ENCODE measurements at regions of chr12 and their contacts with region 1.

Region 1: DNA sequence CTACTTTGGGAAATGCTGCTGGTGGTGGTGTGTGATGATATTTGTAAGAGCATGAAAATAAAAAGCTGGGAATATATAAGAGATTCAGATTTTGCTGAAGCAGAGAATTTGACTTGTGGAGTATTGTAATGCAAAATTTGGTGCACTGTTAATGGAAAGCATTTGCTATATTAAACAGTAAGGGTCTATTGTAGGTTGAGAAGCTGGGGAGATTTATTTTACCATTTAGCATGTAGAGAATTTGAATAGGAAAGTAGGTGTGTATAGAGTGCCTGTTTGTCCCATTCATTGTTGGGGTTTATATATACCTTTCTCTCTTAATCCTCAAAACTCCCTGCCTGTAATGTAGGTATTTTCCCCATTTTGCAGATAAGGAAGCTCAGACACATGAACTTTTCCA is 48.4 kb downstream of the CRADD start:
- DNase-seq: no peak
- ATAC-seq: no peak
- H3K4me3 ChIP-seq: no peak overlapping the region
- H3K4me3 Mint-ChIP-seq: no peak overlapping the region
- H3K27ac ChIP-seq: no peak overlapping the region
- H3K27ac Mint-ChIP-seq: no peak overlapping the region
- H3K4me1 ChIP-seq: no peaks in the 10 kb centered on the region
- H3K4me1 Mint-ChIP-seq: no peaks in the 10 kb centered on the region
- H3K27me3 ChIP-seq: no peaks in the 10 kb centered on the region
- H3K27me3 Mint-ChIP-seq: no peaks in the 10 kb centered on the region

Region 2: DNA sequence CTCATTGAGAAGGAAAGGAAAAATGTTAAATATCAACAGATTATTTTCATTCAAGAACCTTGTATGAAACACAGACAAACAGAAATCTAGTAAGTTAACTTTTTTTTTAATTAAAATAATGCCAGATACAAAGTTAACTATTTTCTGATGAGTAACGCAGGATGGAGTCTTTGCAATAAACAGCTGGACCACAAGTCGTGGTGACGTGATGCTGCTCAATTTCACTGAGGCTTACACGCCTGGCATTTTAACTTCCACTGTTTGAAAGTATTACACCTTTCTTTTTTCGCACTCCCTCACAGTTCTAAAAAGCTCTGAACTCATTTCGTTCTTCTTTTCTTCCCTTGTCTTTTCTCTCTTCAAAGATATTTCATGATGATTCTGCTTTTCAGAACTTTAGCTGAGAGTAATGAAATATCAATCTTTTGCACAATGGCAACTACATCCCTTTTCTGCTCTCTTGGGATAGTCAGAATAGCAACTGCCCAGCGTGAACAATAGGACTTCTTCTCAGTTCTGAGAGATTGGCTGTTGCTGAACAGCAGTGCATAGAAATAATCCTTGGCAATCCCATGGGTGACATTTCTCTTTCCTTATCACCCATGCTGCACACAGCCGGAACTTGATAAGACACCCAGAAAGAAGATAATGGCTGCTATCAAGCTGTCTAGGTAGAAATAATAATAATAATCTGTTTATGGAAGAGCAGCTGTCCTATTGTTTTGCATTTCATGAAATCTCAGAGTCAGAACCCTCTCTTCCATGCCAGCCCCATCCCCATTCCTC is 1740.3 kb before region 1 on chr12:
- CTCF ChIA-PET with region 1: no interaction called
- POLR2A ChIA-PET with region 1: no interaction called
- DNase-seq: no peak
- ATAC-seq: peak in 1 of 4 experiments; percentile 55
- H3K4me3 ChIP-seq: no peak overlapping the region
- H3K4me3 Mint-ChIP-seq: no peak overlapping the region
- H3K27ac ChIP-seq: no peak overlapping the region
- H3K27ac Mint-ChIP-seq: peak overlapping the region in 1 of 2 donors; percentile 48
- H3K4me1 ChIP-seq: no peaks in the 10 kb centered on the region
- H3K4me1 Mint-ChIP-seq: peaks cover 66 to 82% (median 68%) of the 10 kb centered on the region in 3 donors
- H3K27me3 ChIP-seq: no peaks in the 10 kb centered on the region
- H3K27me3 Mint-ChIP-seq: no peaks in the 10 kb centered on the region

Region 3: GRCh38 chr12:93668919-93669418 is 56.6 kb before region 1 on chr12:
- CTCF ChIA-PET with region 1: no interaction called
- POLR2A ChIA-PET with region 1: no interaction called
- DNase-seq: no peak
- ATAC-seq: no peak
- H3K4me3 ChIP-seq: no peak overlapping the region
- H3K4me3 Mint-ChIP-seq: no peak overlapping the region
- H3K27ac ChIP-seq: no peak overlapping the region
- H3K27ac Mint-ChIP-seq: no peak overlapping the region
- H3K4me1 ChIP-seq: no peaks in the 10 kb centered on the region
- H3K4me1 Mint-ChIP-seq: no peaks in the 10 kb centered on the region
- H3K27me3 ChIP-seq: no peaks in the 10 kb centered on the region
- H3K27me3 Mint-ChIP-seq: peaks cover under 1 to 8% of the 10 kb centered on the region in 2 donors

Region 4: GRCh38 chr12:95072900-95073697 is 1347.6 kb after region 1 on chr12 and contains the start of gene NR2C1:
- CTCF ChIA-PET with region 1: no interaction called
- POLR2A ChIA-PET with region 1: interaction called in 1 of 2 experiments, 14 read pairs
- DNase-seq: peak; percentile 82 to 96 (median 89)
- ATAC-seq: peak; percentile 96 to 98 (median 98)
- H3K4me3 ChIP-seq: peak within 1 kb of the TSS; percentile 75 to 93
- H3K4me3 Mint-ChIP-seq: peak within 1 kb of the TSS; percentile 90 to 97 (median 95)
- H3K27ac ChIP-seq: peak within 1 kb of the TSS; percentile 43
- H3K27ac Mint-ChIP-seq: peak within 1 kb of the TSS; percentile 85 to 94
- H3K4me1 ChIP-seq: peaks cover 3 to 8% of the 10 kb centered on the region in 2 experiments
- H3K4me1 Mint-ChIP-seq: peaks cover 21 to 29% (median 28%) of the 10 kb centered on the region in 3 donors
- H3K27me3 ChIP-seq: no peaks in the 10 kb centered on the region
- H3K27me3 Mint-ChIP-seq: no peaks in the 10 kb centered on the region
- total RNA-seq, gene NR2C1: 35.3 to 47.2 (median 39.6) TPM

Measured in T-cell (primary cell).